HepG2 (cell line): ENCODE measurements at regions of chr17 and their contacts with region 1.

Region 1: GRCh38 chr17:76264755-76265596 is at the start of gene UBALD2:
- DNase-seq: peak; percentile 98
- ATAC-seq: peak; percentile 96
- H3K4me3 ChIP-seq: peak within 1 kb of the TSS; percentile 88 to 98 (median 92)
- H3K27ac ChIP-seq: peak within 1 kb of the TSS; percentile 63
- H3K4me1 ChIP-seq: peaks cover 76% of the 10 kb centered on the region
- H3K27me3 ChIP-seq: no peaks in the 10 kb centered on the region
- CTCF ChIP-seq: no peak
- EP300 ChIP-seq: 0 out of 4 replicates have a peak, but pooled peaks have one; percentile 15 to 21
- POLR2A ChIP-seq: peak; percentile 55; a peak in 2 of 4 replicates
- RAD21 ChIP-seq: peak; percentile 15; the same call in 1 of the 2 replicates
- total RNA-seq, gene UBALD2: 3.3 and 5.3 TPM in 2 replicates

Region 2: DNA sequence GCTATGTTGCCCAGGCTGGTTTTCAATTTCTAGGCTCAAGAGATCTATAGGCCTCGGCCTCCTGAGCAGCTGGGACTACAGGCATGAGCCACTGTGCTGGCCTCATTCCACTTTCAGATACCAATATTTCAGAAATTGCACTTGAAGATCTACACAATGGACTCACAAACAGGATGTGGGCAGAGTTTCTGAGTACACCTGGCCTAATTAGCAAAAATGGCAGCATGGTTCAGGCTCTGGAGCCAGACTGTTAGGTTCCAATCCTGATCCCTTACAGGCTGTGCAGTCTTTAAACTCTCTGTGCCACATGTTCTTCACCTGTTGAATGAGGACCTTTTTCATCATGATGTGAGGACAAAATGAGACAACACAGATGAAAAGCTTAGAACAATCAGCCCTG is 56.9 kb before region 1 on chr17:
- CTCF ChIA-PET with region 1: no interaction called
- POLR2A ChIA-PET with region 1: no interaction called
- in situ Hi-C with region 1: no loop called
- intact Hi-C with region 1: loop called (anchors 2 kb)
- DNase-seq: no peak
- ATAC-seq: no peak
- H3K4me3 ChIP-seq: no peak overlapping the region
- H3K27ac ChIP-seq: no peak overlapping the region
- H3K4me1 ChIP-seq: peaks cover 15% of the 10 kb centered on the region
- H3K27me3 ChIP-seq: no peaks in the 10 kb centered on the region
- CTCF ChIP-seq: no peak
- EP300 ChIP-seq: no peak
- POLR2A ChIP-seq: no peak
- RAD21 ChIP-seq: no peak

Region 3: DNA sequence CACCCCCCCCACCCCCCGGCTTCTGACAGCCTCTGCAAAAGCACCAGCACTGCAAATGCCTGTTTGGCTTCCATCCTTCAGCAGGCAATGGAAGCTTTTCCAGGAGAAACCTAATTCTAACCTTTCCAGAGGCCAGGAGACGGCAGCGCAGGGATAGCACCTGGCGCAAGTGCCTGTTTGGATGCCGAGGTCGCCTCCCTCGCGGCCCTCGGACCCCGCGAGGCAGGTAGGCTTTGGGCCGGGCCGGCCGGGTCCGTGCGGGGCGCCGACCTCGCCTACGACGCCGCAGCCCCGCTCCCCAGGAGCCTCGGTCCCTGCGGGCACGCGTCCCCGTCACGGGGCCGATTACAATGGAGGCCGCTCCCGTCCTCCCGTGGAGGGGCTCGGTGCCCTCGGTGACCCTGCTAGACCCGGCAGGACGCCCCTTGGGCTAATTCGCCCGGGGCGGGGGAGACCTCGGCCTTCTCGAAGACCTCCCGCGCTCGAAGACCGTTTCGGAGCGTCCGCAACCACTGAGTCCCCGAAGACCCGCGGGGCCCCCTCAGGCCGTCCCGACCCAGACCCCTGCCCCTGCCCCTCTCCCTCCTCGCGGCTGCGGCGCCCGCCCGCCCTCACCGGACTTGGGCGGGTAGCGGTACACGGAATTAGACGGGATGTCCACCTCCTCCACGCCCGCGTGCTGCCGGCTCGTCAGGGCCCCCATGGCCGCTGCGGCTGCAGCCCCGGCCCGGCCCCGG is 25.3 kb before region 1 on chr17:
- CTCF ChIA-PET with region 1: no interaction called
- POLR2A ChIA-PET with region 1: interaction called, 32 read pairs
- in situ Hi-C with region 1: no loop called
- intact Hi-C with region 1: no loop called
- DNase-seq: no peak
- ATAC-seq: peak; percentile 8; the same call in 2 of the 3 replicates
- H3K4me3 ChIP-seq: peak overlapping the region in 2 of 3 experiments; percentile 23 to 56; a peak in 2 of 6 replicates
- H3K27ac ChIP-seq: no peak overlapping the region
- H3K4me1 ChIP-seq: peaks cover 41% of the 10 kb centered on the region
- H3K27me3 ChIP-seq: peaks cover 12 to 52% of the 10 kb centered on the region in 2 experiments; a peak in 4 of 5 replicates
- CTCF ChIP-seq: no peak
- EP300 ChIP-seq: no peak
- POLR2A ChIP-seq: no peak
- RAD21 ChIP-seq: no peak

Region 4: GRCh38 chr17:76246080-76247066 is 18.6 kb before region 1 on chr17:
- CTCF ChIA-PET with region 1: no interaction called
- POLR2A ChIA-PET with region 1: interaction called, 51 read pairs
- in situ Hi-C with region 1: no loop called
- intact Hi-C with region 1: no loop called
- DNase-seq: peak; percentile 67
- ATAC-seq: peak; percentile 86
- H3K4me3 ChIP-seq: peak overlapping the region in 2 of 3 experiments; percentile 1 to 36; a peak in 1 of 6 replicates
- H3K27ac ChIP-seq: peak overlapping the region; percentile 49
- H3K4me1 ChIP-seq: peaks cover 64% of the 10 kb centered on the region
- H3K27me3 ChIP-seq: peaks cover 4 to 30% of the 10 kb centered on the region in 2 experiments; a peak in 4 of 5 replicates
- CTCF ChIP-seq: no peak
- EP300 ChIP-seq: peak in 1 of 2 experiments; percentile 46; a peak in 2 of 4 replicates
- POLR2A ChIP-seq: no peak
- RAD21 ChIP-seq: peak; percentile 10; the same call in 1 of the 2 replicates

Region 5: DNA sequence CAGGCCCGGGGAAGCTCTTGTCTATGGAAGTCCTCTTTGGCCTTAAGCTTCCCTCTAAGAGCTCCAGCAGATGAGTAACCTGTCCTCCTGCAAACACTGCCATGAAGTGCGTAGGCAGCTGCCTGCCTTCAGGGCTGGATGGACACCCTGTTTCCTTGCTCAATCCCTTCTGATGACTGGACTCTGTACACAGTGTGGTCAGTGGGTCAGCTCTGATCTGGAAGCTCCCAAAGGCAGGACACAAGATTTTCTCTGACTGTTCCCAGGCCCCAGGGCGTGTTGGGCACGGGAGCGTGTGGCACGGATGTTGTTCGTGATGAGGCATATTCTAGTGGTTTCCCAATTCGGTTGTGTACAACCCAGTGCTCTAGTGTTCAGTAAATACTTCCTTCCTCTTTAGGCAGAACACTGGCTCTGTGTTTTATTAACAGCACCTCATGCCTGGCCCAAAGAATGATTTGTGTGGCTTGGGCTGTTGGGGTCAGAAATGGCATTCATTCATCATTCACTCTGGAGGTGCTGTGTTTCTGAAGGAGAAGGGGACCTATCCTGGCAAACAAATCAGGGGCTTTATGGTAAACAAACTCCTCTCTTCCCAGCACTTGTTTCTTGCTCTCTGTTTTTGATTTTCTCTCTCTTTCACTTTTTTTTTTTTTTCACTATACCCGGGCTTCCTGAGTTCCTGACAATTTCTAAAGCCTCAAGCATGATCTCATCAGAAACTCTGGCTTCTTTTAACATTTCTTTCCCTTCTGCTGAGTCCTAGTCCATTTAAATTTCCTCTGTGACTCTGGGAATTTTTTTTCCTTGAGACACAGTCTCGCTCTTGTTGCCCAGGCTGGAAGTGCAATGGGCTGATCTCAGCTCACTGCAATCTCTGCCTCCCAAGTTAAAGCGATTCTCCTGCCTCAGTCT is 12.7 kb before region 1 on chr17:
- CTCF ChIA-PET with region 1: no interaction called
- POLR2A ChIA-PET with region 1: interaction called, 51 read pairs
- in situ Hi-C with region 1: no loop called
- intact Hi-C with region 1: no loop called
- DNase-seq: peak; percentile 94
- ATAC-seq: peak; percentile 94
- H3K4me3 ChIP-seq: peak overlapping the region; percentile 7 to 63 (median 11); a peak in 3 of 6 replicates
- H3K27ac ChIP-seq: peak overlapping the region; percentile 63
- H3K4me1 ChIP-seq: peaks cover 80% of the 10 kb centered on the region
- H3K27me3 ChIP-seq: no peaks in the 10 kb centered on the region
- CTCF ChIP-seq: no peak
- EP300 ChIP-seq: peak in 1 of 2 experiments; percentile 71; a peak in 2 of 4 replicates
- POLR2A ChIP-seq: peak in 1 of 2 experiments; percentile 64; a peak in 1 of 4 replicates
- RAD21 ChIP-seq: peak; percentile 35; the same call in 1 of the 2 replicates

Region 6: GRCh38 chr17:76307299-76307965 is 42.5 kb after region 1 on chr17:
- CTCF ChIA-PET with region 1: no interaction called
- POLR2A ChIA-PET with region 1: no interaction called
- in situ Hi-C with region 1: no loop called
- intact Hi-C with region 1: no loop called
- DNase-seq: no peak
- ATAC-seq: peak; percentile 16
- H3K4me3 ChIP-seq: no peak overlapping the region
- H3K27ac ChIP-seq: no peak overlapping the region
- H3K4me1 ChIP-seq: no peaks in the 10 kb centered on the region
- H3K27me3 ChIP-seq: no peaks in the 10 kb centered on the region
- CTCF ChIP-seq: no peak
- EP300 ChIP-seq: no peak
- POLR2A ChIP-seq: peak in 1 of 2 experiments; percentile 43; a peak in 1 of 4 replicates
- RAD21 ChIP-seq: no peak

Region 7: DNA sequence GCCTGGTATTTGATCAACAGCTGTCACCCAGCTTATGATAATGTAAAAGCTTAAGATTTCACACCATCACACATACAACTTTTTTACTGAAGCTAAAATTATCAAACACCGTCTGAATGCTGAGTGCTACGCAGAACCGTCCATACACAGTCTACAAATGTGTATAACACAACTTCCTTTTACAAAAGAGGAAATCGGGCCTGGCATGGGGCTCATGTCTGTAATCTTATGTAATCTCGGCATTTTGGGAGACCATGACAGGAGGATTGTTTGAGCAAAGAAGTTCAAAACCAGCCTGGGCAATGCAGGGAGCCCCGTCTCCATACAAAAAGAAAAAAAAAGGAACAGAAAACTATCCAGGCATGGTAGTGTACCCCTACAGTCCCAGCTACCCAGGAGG is 62.7 kb after region 1 on chr17:
- CTCF ChIA-PET with region 1: no interaction called
- POLR2A ChIA-PET with region 1: no interaction called
- in situ Hi-C with region 1: no loop called
- intact Hi-C with region 1: no loop called
- DNase-seq: no peak
- ATAC-seq: no peak
- H3K4me3 ChIP-seq: no peak overlapping the region
- H3K27ac ChIP-seq: no peak overlapping the region
- H3K4me1 ChIP-seq: no peaks in the 10 kb centered on the region
- H3K27me3 ChIP-seq: no peaks in the 10 kb centered on the region
- CTCF ChIP-seq: no peak
- EP300 ChIP-seq: no peak
- POLR2A ChIP-seq: no peak
- RAD21 ChIP-seq: no peak